Upper lobe of right lung (tissue), 1 donor: ENCODE measurements at regions of chr12 and their contacts with region 1.

Region 1: DNA sequence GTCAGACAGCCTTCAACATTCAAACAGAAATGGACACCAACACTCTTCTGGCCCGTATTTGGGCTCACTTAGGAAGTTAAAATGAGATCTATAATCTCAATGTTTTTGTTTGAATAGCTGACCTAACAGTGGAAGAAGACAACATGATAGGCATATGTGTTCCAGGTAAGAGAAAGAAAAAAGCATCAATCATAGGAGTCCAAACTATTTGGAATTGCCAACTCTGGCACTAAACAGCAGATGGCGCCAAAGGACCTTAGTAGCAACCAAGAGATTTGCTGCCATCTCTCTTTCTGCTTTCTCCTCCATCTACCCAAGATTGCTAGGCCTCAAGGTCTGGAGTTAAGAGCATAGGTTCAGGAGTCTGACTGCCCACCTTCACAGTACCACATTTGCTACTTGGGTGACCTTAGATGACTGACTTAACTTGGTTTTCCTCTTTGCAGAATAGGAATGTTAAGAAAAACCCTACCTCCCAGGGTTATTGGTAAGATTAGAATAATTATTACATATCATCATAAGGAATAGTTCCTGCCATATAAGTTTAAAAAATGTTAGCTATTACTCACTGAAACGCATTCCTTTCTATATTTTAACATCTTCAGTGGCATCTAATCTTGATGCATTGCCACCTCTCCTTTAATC is 30.2 kb downstream of the PEX5 start:
- DNase-seq: no peak
- ATAC-seq: peak; percentile 91
- H3K4me3 ChIP-seq: no peak overlapping the region
- H3K27ac ChIP-seq: no peak overlapping the region
- H3K4me1 ChIP-seq: no peaks in the 10 kb centered on the region
- H3K27me3 ChIP-seq: no peaks in the 10 kb centered on the region
- CTCF ChIP-seq: peak; percentile 90

Region 2: GRCh38 chr12:7460375-7461259 is 240.9 kb after region 1 on chr12:
- intact Hi-C with region 1: loop called (anchors 10 kb)
- DNase-seq: no peak
- ATAC-seq: peak; percentile 94
- H3K4me3 ChIP-seq: no peak overlapping the region
- H3K27ac ChIP-seq: no peak overlapping the region
- H3K4me1 ChIP-seq: no peaks in the 10 kb centered on the region
- H3K27me3 ChIP-seq: peaks cover 5% of the 10 kb centered on the region
- CTCF ChIP-seq: peak; percentile 87

Region 3: GRCh38 chr12:7638760-7639555 is 419.2 kb after region 1 on chr12:
- intact Hi-C with region 1: loop called (anchors 5 kb)
- DNase-seq: peak; percentile 69
- ATAC-seq: peak; percentile 98
- H3K4me3 ChIP-seq: peak overlapping the region; percentile 33
- H3K27ac ChIP-seq: no peak overlapping the region
- H3K4me1 ChIP-seq: no peaks in the 10 kb centered on the region
- H3K27me3 ChIP-seq: no peaks in the 10 kb centered on the region
- CTCF ChIP-seq: peak; percentile 83